PC-3 (cell line): ENCODE measurements at regions of chr12 and their contacts with region 1.

Region 1: DNA sequence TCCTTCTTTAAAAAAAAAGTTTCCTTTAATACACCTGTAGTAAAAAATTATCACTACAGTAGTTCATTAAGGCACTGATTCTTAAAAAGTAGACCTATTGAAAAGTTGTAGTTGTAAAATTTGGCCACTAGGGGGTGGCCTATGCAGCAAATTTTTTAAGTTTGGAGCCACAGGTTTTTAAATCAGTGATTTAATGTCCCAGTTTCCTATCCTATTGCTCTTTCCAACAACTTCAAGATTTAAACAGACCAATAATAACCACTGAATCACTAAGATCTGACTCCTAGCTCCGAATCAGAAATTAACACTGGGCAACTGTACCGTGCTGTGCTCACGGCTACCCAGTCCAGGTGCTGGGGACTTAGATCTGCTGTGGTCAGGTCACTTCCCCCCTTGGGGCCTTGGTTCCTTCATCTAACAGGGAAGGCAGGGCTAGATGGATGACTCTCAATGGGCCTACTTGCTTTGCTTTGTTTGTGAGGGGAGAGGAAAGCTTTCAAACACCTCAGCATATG is 279.3 kb downstream of the MED13L start:
- DNase-seq: peak; percentile 81
- ATAC-seq: peak; percentile 66
- H3K4me3 ChIP-seq: no peak overlapping the region
- H3K27ac ChIP-seq: no peak overlapping the region
- H3K4me1 ChIP-seq: peaks cover 17% of the 10 kb centered on the region
- H3K27me3 ChIP-seq: no peaks in the 10 kb centered on the region
- CTCF ChIP-seq: peak; percentile 97

Region 2: DNA sequence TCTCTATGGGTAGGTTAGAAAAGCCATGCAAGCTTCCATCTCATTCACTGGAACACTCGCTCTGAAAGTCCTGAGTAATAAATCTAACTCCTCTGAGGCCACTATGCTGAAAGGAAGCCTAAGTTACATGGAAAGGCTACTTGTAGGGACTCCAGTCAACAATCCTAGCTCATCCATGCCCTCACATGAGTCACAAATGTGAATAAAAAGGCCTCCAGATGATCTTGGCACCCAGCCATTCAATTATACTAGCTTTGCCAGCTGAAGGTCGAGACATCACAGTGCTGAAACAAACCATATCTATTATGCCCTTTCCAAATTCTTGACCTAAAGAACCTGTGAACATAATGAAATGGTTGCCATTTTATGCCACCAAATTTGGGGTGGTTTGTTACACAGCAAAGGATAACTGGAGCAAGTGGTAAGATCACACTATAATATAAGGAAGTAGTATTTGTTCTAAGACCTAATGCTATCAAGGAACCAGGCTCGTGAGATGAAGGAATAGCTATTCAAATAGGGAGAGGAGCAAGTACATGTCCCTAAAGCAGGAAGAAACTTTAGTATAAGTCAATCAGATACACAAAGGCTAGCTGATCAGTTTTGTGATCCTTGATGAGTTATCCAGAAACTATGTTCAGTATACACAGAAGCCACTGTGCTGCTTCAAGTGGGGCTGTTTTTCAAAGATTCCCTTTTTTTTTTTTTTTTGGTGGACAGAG is 137.2 kb after region 1 on chr12:
- CTCF ChIA-PET with region 1: no interaction called
- POLR2A ChIA-PET with region 1: no interaction called
- intact Hi-C with region 1: loop called (anchors 5 kb)
- DNase-seq: peak; percentile 93
- ATAC-seq: peak; percentile 79
- H3K4me3 ChIP-seq: no peak overlapping the region
- H3K27ac ChIP-seq: peak overlapping the region; percentile 53
- H3K4me1 ChIP-seq: peaks cover 39% of the 10 kb centered on the region
- H3K27me3 ChIP-seq: no peaks in the 10 kb centered on the region
- CTCF ChIP-seq: no peak

Region 3: DNA sequence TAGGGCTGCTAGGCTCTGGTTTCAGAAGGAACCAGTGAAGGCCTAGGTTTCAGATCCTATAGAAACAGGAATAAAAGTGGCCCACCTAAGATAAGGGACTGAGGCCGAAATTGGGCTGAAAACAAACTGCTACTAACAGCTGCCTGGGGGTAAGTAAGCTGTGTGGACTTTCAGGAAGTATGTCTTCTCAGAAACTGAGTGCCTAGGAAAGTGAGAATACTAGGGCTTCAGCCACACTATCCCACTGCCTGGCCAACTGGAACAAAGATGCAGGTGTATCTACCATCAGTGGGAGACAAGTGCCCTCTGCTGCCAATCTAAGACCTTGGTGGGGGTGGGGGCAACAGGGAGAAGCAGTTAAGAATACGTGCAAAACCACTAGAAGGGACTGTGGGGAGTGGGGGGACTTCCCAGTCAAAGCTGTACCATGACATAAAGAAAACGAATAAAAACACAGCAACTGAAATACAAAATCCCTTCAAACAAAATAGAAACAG is 196.8 kb after region 1 on chr12:
- CTCF ChIA-PET with region 1: no interaction called
- POLR2A ChIA-PET with region 1: interaction called, 22 read pairs
- intact Hi-C with region 1: no loop called
- DNase-seq: no peak
- ATAC-seq: no peak; the same call in 1 of the 2 replicates
- H3K4me3 ChIP-seq: no peak overlapping the region
- H3K27ac ChIP-seq: no peak overlapping the region
- H3K4me1 ChIP-seq: no peaks in the 10 kb centered on the region
- H3K27me3 ChIP-seq: no peaks in the 10 kb centered on the region
- CTCF ChIP-seq: peak; percentile 32; the same call in 1 of the 2 replicates